ENCODE measurements at regions of chr5 and their contacts with region 1.

Region 1: GRCh38 chr5:132820162-132820754 is 7.2 kb downstream of the SOWAHA start:
- DNase-seq: peak; percentile 64
- ATAC-seq: peak; percentile 94
- H3K4me3 ChIP-seq: peak overlapping the region in 1 of 2 experiments; percentile 0; a peak in 1 of 4 replicates
- H3K27ac ChIP-seq: no peak overlapping the region
- H3K4me1 ChIP-seq: peaks cover 14% of the 10 kb centered on the region
- H3K27me3 ChIP-seq: no peaks in the 10 kb centered on the region
- CTCF ChIP-seq: peak; percentile 93

Region 2: DNA sequence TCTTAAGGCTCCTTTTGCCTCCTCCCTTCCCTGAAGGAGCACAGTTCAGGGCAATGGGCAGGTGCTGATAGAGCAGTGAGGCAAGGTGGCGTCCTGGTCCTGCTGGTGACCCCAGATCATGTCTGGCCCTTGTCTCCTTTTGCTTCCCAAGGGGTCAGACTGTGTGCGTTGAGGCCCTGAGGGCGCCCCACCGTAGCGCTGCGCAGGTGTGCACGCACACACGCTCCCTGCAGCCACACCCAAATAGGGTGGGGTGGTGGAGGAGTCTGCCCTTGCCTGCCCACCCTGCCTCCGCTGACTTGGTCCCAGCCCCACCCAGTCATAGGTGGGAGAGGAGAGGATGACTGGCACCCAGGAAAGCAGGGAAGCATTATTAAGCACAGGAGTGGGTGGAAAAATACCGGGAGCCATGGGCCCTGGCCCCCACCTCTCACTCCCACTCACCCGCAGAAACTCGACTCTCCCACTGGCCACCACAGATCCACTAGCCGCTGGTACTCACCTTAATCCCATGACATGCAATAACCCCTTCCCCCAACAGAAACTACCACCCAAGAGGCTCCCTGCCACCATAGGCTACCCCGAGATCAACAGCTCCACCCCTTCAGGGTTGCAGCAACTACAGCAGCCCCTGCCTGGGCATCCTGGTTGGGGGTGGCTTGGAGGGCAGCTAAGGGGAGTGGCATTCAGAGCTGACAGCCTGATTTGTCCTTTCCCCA is 546.0 kb before region 1 on chr5:
- CTCF ChIA-PET with region 1: interaction called, 14 read pairs
- POLR2A ChIA-PET with region 1: no interaction called
- in situ Hi-C with region 1: no loop called
- intact Hi-C with region 1: no loop called
- DNase-seq: no peak
- ATAC-seq: no peak
- H3K4me3 ChIP-seq: no peak overlapping the region
- H3K27ac ChIP-seq: no peak overlapping the region
- H3K4me1 ChIP-seq: peaks cover 4% of the 10 kb centered on the region
- H3K27me3 ChIP-seq: no peaks in the 10 kb centered on the region
- CTCF ChIP-seq: no peak

Region 3: GRCh38 chr5:132386644-132387286 is 433.5 kb before region 1 on chr5:
- CTCF ChIA-PET with region 1: interaction called, 3 read pairs
- POLR2A ChIA-PET with region 1: no interaction called
- in situ Hi-C with region 1: no loop called
- intact Hi-C with region 1: loop called (anchors 10 kb)
- DNase-seq: no peak
- ATAC-seq: peak; percentile 78
- H3K4me3 ChIP-seq: no peak overlapping the region; a peak in 1 of 4 replicates
- H3K27ac ChIP-seq: peak overlapping the region; percentile 76
- H3K4me1 ChIP-seq: peaks cover 40% of the 10 kb centered on the region
- H3K27me3 ChIP-seq: no peaks in the 10 kb centered on the region
- CTCF ChIP-seq: peak; percentile 88

Region 4: GRCh38 chr5:132641241-132641723 is 179.0 kb before region 1 on chr5:
- CTCF ChIA-PET with region 1: no interaction called
- POLR2A ChIA-PET with region 1: interaction called, 16 read pairs
- in situ Hi-C with region 1: no loop called
- intact Hi-C with region 1: no loop called
- DNase-seq: no peak
- ATAC-seq: no peak
- H3K4me3 ChIP-seq: no peak overlapping the region
- H3K27ac ChIP-seq: no peak overlapping the region
- H3K4me1 ChIP-seq: no peaks in the 10 kb centered on the region
- H3K27me3 ChIP-seq: no peaks in the 10 kb centered on the region
- CTCF ChIP-seq: no peak

Region 5: GRCh38 chr5:132736853-132737833 is 83.1 kb before region 1 on chr5 and contains the start of gene KIF3A:
- CTCF ChIA-PET with region 1: interaction called, 11 read pairs
- POLR2A ChIA-PET with region 1: no interaction called
- in situ Hi-C with region 1: no loop called
- intact Hi-C with region 1: no loop called
- DNase-seq: peak; percentile 88
- ATAC-seq: peak; percentile 99
- H3K4me3 ChIP-seq: peak within 1 kb of the TSS; percentile 70 to 80
- H3K27ac ChIP-seq: peak within 1 kb of the TSS; percentile 75
- H3K4me1 ChIP-seq: peaks cover 15% of the 10 kb centered on the region
- H3K27me3 ChIP-seq: no peaks in the 10 kb centered on the region
- CTCF ChIP-seq: no peak
- total RNA-seq, gene KIF3A: 17.1 TPM

Region 6: GRCh38 chr5:132808448-132808847 is 11.8 kb before region 1 on chr5:
- CTCF ChIA-PET with region 1: interaction called, 11 read pairs
- POLR2A ChIA-PET with region 1: no interaction called
- in situ Hi-C with region 1: no loop called
- intact Hi-C with region 1: no loop called
- DNase-seq: no peak
- ATAC-seq: no peak
- H3K4me3 ChIP-seq: no peak overlapping the region
- H3K27ac ChIP-seq: no peak overlapping the region
- H3K4me1 ChIP-seq: peaks cover 4% of the 10 kb centered on the region; the same call in 1 of the 2 replicates
- H3K27me3 ChIP-seq: peaks cover 10% of the 10 kb centered on the region
- CTCF ChIP-seq: no peak

Measured in Panc1 (cell line).